Transverse colon (tissue), 4 donors: ENCODE measurements at regions of chr6 and their contacts with region 1.

Region 1: DNA sequence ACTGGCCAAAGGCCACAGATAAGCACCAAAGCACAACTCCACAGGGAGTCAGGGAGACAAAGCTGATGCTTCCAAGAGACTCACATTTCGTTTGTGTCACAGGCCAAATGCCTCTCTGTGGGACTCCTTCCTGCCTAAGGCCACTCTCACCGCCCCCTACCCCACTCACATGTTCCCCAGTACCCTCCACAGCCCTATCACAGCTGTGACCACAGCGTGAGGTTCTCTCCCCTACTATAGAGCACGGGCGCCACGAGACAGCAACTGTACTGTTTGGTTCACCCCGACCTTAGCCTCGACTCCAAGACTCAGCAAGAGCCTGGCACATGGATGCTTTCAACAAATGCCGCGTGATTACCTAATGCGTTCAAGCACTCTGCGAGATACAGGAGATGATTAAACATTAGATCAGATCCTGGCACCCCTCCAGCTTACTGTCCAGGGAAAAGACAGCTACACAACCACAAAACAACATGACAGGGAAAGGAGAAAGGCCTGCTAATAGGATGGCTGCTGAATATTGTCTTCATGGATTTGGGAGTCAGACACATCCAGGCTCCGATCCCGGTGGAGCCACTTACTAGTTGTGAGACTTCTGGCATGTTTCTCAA is 105.5 kb downstream of the AGPAT4 start:
- DNase-seq: no peak
- H3K4me3 ChIP-seq: no peak overlapping the region
- H3K27ac ChIP-seq: no peak overlapping the region
- H3K4me1 ChIP-seq: no peaks in the 10 kb centered on the region
- H3K27me3 ChIP-seq: no peaks in the 10 kb centered on the region
- CTCF ChIP-seq: no peak
- EP300 ChIP-seq: no peak
- POLR2A ChIP-seq: no peak

Region 2: GRCh38 chr6:161279677-161280415 is 111.5 kb after region 1 on chr6:
- in situ Hi-C with region 1: no loop called
- intact Hi-C with region 1: loop called (anchors 10 kb)
- DNase-seq: no peak
- H3K4me3 ChIP-seq: no peak overlapping the region
- H3K27ac ChIP-seq: no peak overlapping the region
- H3K4me1 ChIP-seq: no peaks in the 10 kb centered on the region
- H3K27me3 ChIP-seq: no peaks in the 10 kb centered on the region
- CTCF ChIP-seq: no peak
- EP300 ChIP-seq: no peak
- POLR2A ChIP-seq: no peak